Activated CD4-positive, alpha-beta T cell treated with anti-CD3 and anti-CD28 coated beads for 36 hours (primary cell): ENCODE measurements at regions of chr13 and their contacts with region 1.

Region 1: GRCh38 chr13:74062933-74063332 is 71.3 kb downstream of the KLF12 start:
- DNase-seq: peak; percentile 60
- ATAC-seq: peak; percentile 67
- H3K4me3 Mint-ChIP-seq: peak overlapping the region; percentile 64
- H3K27ac Mint-ChIP-seq: peak overlapping the region; percentile 92
- H3K4me1 Mint-ChIP-seq: peaks cover 82% of the 10 kb centered on the region
- H3K27me3 Mint-ChIP-seq: no peaks in the 10 kb centered on the region

Region 2: DNA sequence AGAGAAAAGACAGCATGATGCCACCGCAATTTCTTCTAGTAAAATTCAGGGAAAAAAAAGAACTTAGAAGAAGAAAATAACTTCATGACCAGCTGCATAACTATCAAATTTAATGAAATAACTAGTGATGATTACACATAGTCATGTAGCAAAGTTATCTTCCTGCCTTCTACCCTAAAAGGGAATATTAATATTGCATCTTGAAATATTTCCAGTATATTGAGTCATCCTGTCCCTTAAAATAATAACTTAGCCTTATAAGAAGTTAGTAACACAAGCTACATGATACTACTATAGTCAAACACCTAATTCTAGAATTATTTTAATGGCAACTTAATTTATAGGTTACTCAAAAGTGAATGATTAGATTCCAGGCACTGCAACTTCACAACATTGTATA is 217.9 kb before region 1 on chr13:
- CTCF ChIA-PET with region 1: no interaction called
- POLR2A ChIA-PET with region 1: no interaction called
- intact Hi-C with region 1: no loop called
- DNase-seq: no peak
- ATAC-seq: no peak
- H3K4me3 Mint-ChIP-seq: no peak overlapping the region
- H3K27ac Mint-ChIP-seq: no peak overlapping the region
- H3K4me1 Mint-ChIP-seq: peaks cover 37% of the 10 kb centered on the region
- H3K27me3 Mint-ChIP-seq: no peaks in the 10 kb centered on the region

Region 3: DNA sequence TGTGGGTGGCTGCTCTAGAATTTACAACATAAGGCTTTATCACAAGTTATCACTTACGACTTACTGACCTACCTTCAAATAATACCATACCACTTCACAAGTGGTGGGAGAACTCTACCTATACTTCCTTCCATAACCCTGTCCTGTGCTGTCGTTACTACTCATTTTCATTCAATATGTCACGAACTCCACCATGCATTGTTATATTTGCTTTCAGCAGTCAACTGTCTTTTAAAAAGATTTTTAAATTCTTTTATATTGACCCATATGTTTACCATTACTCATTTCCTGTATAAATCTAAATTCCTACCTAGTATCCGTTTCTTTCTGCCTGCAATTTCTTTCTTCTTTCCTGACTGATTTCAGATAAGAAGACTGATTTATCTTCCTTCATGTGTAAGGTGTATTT is 128.7 kb before region 1 on chr13:
- CTCF ChIA-PET with region 1: no interaction called
- POLR2A ChIA-PET with region 1: no interaction called
- intact Hi-C with region 1: loop called in 1 of 2 experiments (anchors 5 kb)
- DNase-seq: no peak
- ATAC-seq: peak; percentile 14
- H3K4me3 Mint-ChIP-seq: no peak overlapping the region
- H3K27ac Mint-ChIP-seq: no peak overlapping the region
- H3K4me1 Mint-ChIP-seq: peaks cover 55% of the 10 kb centered on the region
- H3K27me3 Mint-ChIP-seq: no peaks in the 10 kb centered on the region

Region 4: GRCh38 chr13:73984949-73985691 is 77.8 kb before region 1 on chr13:
- CTCF ChIA-PET with region 1: interaction called, 5 read pairs
- POLR2A ChIA-PET with region 1: interaction called, 7 read pairs
- intact Hi-C with region 1: loop called (anchors 5 kb)
- DNase-seq: peak; percentile 89
- ATAC-seq: peak; percentile 90
- H3K4me3 Mint-ChIP-seq: peak overlapping the region; percentile 58
- H3K27ac Mint-ChIP-seq: peak overlapping the region; percentile 98
- H3K4me1 Mint-ChIP-seq: peaks cover 36% of the 10 kb centered on the region
- H3K27me3 Mint-ChIP-seq: no peaks in the 10 kb centered on the region

Region 5: GRCh38 chr13:74026753-74027152 is 36.2 kb before region 1 on chr13:
- CTCF ChIA-PET with region 1: no interaction called
- POLR2A ChIA-PET with region 1: interaction called, 4 read pairs
- intact Hi-C with region 1: loop called (anchors 2 kb)
- DNase-seq: peak; percentile 80
- ATAC-seq: peak; percentile 97
- H3K4me3 Mint-ChIP-seq: peak overlapping the region; percentile 74
- H3K27ac Mint-ChIP-seq: peak overlapping the region; percentile 97
- H3K4me1 Mint-ChIP-seq: peaks cover 76% of the 10 kb centered on the region
- H3K27me3 Mint-ChIP-seq: no peaks in the 10 kb centered on the region

Region 6: DNA sequence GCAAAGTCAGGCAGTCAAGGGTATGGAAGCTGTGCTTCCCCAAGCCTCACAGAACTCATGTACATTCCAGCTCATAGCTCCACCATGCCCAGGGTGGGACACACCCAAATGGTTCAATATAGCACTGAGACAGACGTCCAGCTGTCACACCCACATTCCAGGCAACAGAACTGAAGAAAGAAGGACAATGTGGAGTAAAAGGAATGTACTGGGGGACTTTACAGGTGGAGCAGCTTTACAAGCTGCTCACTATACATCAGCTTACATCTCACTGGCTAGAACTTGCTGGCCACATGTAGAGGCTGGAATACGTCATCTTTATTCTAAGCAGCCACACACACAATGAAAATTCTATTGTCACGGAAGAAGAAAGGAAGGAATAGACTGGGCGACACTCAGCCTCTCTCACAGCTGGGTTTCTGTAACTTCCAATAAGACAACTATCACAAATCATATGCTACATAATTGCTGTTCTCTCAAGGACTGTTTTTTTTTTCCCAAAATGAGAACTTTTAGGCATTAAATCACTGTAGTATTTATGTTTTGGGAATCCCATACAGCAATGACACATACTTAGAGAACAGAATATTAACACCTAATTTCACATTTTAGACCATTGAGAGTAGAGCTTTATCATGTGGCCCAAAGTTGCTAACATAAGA is 14.9 kb before region 1 on chr13:
- CTCF ChIA-PET with region 1: no interaction called
- POLR2A ChIA-PET with region 1: no interaction called
- intact Hi-C with region 1: loop called in 1 of 2 experiments (anchors 2 kb)
- DNase-seq: no peak
- ATAC-seq: no peak
- H3K4me3 Mint-ChIP-seq: no peak overlapping the region
- H3K27ac Mint-ChIP-seq: no peak overlapping the region
- H3K4me1 Mint-ChIP-seq: peaks cover 64% of the 10 kb centered on the region
- H3K27me3 Mint-ChIP-seq: no peaks in the 10 kb centered on the region

Region 7: DNA sequence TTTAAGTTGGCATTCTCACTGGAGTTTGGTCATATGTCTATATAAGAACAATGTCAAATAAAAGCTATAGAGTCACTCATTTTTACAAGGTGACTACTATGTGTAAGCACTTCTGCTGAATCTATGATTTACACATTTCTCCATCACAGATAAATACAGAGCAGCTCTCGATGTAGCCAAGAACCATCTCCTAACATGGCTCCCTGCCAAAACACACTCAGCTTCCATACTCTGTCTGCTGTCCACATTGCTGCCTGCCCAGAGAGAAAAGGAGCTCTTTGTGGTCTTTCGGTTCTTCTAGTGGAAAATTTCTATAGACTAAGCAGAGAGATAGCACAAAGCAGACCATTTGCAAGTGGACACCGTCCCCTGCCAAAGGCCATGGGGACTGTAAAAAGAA is 262.2 kb after region 1 on chr13:
- CTCF ChIA-PET with region 1: no interaction called
- POLR2A ChIA-PET with region 1: no interaction called
- intact Hi-C with region 1: no loop called
- DNase-seq: no peak
- ATAC-seq: no peak
- H3K4me3 Mint-ChIP-seq: no peak overlapping the region
- H3K27ac Mint-ChIP-seq: no peak overlapping the region
- H3K4me1 Mint-ChIP-seq: no peaks in the 10 kb centered on the region
- H3K27me3 Mint-ChIP-seq: no peaks in the 10 kb centered on the region